ENCODE measurements at regions of chr3 and their contacts with region 1.

Region 1: GRCh38 chr3:183377307-183377959 is 51.0 kb downstream of the MCF2L2 start:
- DNase-seq: no peak
- ATAC-seq: no peak
- H3K4me3 ChIP-seq: no peak overlapping the region
- H3K27ac ChIP-seq: no peak overlapping the region
- H3K4me1 ChIP-seq: peaks cover 0 to 36% (median 0%) of the 10 kb centered on the region in 12 donors
- H3K27me3 ChIP-seq: no peaks in the 10 kb centered on the region
- CTCF ChIP-seq: no peak
- POLR2A ChIP-seq: no peak

Region 2: DNA sequence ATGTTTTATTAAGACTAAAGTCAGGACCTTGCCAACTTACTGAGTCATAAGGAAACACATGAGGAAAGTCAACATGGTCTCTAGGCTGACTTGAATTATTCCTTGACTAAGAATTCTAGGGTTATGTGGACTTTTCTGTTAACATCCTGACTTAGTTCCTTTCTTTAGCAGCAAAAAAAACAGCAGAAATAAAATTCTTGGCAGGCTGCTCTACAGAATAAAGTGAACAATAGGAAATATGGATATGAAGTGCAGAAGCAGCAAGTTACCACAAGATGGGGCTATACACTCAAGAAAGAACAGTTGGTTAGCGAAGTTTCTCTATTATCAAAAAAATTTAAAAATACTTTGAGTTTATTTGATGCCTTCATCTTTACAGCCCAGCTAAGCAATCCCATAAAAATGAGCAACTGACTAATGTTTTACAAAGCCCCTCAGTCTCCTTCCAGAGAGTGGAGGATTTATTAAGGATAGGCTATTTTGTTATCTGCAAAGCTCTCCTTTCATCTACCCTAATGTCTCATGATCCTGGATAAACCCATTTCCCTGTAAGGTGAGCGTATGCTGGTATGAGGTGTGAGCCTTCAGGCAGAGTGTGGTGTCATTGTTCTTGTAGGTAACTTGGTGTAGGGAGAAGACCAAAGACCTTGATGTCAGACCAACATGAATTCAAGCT is 255.0 kb before region 1 on chr3:
- intact Hi-C with region 1: loop called in 3 of 10 experiments (anchors 1 to 5 kb)
- DNase-seq: no peak
- ATAC-seq: peak in 3 of 4 donors; percentile 34 to 57 (median 49)
- H3K4me3 ChIP-seq: no peak overlapping the region
- H3K27ac ChIP-seq: no peak overlapping the region
- H3K4me1 ChIP-seq: peaks cover 0 to 3% (median 0%) of the 10 kb centered on the region in 12 donors
- H3K27me3 ChIP-seq: peaks cover 0 to 9% (median 0%) of the 10 kb centered on the region in 9 donors
- CTCF ChIP-seq: peak; percentile 69 to 91 (median 82)
- POLR2A ChIP-seq: no peak

Region 3: DNA sequence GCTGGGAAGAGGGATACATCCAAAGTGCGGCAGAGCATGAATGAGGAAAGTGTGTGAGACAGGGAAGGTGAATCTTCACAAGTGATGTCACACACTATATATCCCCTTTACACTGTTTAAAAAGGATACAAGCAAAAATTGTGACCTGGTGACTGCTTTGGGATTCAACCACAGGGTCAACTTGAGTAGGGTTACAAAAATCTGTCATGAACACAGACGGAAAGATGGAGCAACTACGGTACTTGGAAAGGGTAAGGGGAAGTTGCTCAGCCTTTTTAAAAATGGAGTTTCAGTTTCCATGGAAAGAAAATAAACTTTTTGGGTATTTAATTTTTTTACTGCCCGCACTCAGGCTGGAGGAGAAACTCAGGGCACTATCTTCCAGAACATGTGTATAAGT is 64.1 kb before region 1 on chr3:
- intact Hi-C with region 1: loop called in 1 of 10 experiments (anchors 2 kb)
- DNase-seq: no peak
- ATAC-seq: no peak
- H3K4me3 ChIP-seq: no peak overlapping the region
- H3K27ac ChIP-seq: peak overlapping the region in 1 of 12 donors; percentile 49
- H3K4me1 ChIP-seq: peaks cover 0 to 31% (median 0%) of the 10 kb centered on the region in 12 donors
- H3K27me3 ChIP-seq: no peaks in the 10 kb centered on the region
- CTCF ChIP-seq: no peak
- POLR2A ChIP-seq: no peak

Region 4: GRCh38 chr3:183331498-183331897 is 45.9 kb before region 1 on chr3:
- intact Hi-C with region 1: no loop called
- DNase-seq: no peak
- ATAC-seq: no peak
- H3K4me3 ChIP-seq: no peak overlapping the region
- H3K27ac ChIP-seq: no peak overlapping the region
- H3K4me1 ChIP-seq: no peaks in the 10 kb centered on the region
- H3K27me3 ChIP-seq: no peaks in the 10 kb centered on the region
- CTCF ChIP-seq: no peak
- POLR2A ChIP-seq: no peak

Region 5: GRCh38 chr3:183734750-183735494 is 357.5 kb after region 1 on chr3:
- intact Hi-C with region 1: no loop called
- DNase-seq: no peak
- ATAC-seq: peak in 1 of 4 donors; percentile 16
- H3K4me3 ChIP-seq: no peak overlapping the region
- H3K27ac ChIP-seq: peak overlapping the region in 8 of 12 donors; percentile 2 to 66 (median 37)
- H3K4me1 ChIP-seq: peaks cover 0 to 7% (median 3%) of the 10 kb centered on the region in 12 donors
- H3K27me3 ChIP-seq: no peaks in the 10 kb centered on the region
- CTCF ChIP-seq: no peak
- POLR2A ChIP-seq: no peak

Measured in heart left ventricle (tissue), 16 donors.